ENCODE measurements at regions of chr10 and their contacts with region 1.

Region 1: DNA sequence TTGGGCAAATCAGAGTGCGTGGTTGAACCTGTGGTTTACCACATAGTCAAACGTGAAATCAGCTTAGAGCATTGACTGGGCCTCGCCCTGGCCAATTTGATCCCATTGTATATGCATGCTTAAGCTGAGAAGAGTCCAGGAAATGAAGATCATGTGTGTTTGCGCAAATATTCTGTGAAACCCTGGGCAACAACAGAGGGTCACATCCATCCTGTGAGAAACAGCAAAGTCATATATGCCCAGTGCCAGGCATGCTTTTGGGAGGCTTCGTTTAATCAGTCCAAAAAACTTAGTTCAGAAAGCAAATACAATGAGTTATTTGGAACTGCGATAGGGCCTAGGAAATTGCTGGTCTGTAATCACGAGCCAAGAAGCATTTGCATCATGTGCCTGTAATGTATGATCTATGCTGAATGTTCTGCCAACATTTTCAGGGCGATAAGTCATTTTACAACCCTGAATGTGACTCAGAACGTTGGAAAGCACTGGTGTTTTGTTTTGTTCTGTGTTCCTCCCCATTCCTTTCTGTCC is 412.1 kb upstream of the CELF2 start:
- DNase-seq: peak in 1 of 2 donors; percentile 81
- H3K4me3 ChIP-seq: no peak overlapping the region
- H3K27ac ChIP-seq: peak overlapping the region; percentile 74 to 80
- H3K4me1 ChIP-seq: no peaks in the 10 kb centered on the region
- H3K27me3 ChIP-seq: no peaks in the 10 kb centered on the region
- CTCF ChIP-seq: no peak

Region 2: DNA sequence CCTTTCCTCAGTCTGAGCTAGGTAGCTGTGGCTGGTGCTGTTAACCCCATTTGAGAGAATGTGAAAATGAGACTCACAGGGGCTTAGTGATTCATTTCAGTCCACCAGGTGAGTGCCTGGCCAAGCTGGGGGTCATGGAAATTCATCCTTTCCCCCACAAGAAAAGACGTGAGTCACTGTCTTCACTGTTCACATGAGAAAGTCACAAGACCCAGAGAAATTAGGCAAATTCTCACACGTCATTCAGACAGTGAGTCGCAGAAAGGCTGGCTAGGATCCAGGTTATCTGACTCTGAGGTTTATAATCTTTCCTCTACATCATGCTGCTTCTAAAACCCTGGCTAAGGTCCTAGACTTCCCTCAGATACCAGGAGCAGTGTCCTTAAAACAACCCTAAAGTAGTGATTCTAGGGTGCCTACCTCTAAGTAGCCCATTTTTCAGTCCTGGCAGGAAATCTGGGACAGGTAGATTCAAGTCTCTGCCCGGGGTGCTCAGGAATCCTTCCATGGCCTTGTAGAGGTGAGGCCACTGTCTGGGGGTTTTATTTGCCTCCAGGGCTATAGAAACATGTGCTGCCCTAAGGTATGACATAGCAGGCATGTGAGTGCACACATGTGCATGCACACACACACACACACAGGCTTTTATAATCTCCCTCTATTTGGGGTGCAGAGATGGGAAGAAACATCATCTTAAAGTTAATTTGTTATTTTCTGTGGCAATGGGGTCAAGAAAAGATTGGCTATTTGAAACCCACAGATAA is 15.9 kb before region 1 on chr10:
- intact Hi-C with region 1: loop called (anchors 2 kb)
- DNase-seq: peak; percentile 21 to 81
- H3K4me3 ChIP-seq: no peak overlapping the region
- H3K27ac ChIP-seq: peak overlapping the region in 1 of 2 donors; percentile 17
- H3K4me1 ChIP-seq: peaks cover 0 to 10% of the 10 kb centered on the region in 2 donors
- H3K27me3 ChIP-seq: no peaks in the 10 kb centered on the region
- CTCF ChIP-seq: no peak

Region 3: DNA sequence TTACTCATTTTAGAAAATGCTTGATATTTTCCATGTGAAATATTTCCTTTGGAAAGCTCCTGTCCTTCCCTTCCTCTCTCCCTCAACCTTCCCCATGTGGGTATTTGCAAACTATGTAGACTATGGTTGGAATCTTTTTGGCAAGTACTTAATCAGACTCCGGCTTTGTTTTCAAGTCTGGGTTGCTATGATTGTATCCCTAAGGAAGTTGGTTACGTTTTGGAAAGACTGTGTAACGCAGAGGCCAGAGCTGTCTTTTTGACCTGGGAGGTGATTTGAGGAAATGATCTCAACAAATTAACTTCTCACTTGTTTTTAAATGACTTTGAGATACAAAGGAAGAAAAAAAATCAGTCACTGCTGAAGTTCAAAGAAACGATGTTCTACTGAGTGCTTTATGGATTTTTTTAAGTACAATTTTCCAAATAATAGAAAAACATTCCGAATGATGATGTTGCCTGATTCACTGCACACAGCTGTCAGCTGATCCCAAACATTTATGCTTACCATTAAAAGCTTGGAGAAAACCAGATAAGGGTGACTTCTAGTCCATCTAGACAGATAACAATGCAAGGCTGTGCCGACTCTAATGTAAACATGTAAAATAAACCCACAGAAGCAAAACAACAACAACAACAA is 266.5 kb after region 1 on chr10:
- intact Hi-C with region 1: loop called (anchors 5 kb)
- DNase-seq: peak in 1 of 2 donors; percentile 84
- H3K4me3 ChIP-seq: peak overlapping the region in 1 of 2 donors; percentile 7
- H3K27ac ChIP-seq: peak overlapping the region; percentile 83 to 88
- H3K4me1 ChIP-seq: peaks cover 0 to 33% of the 10 kb centered on the region in 2 donors
- H3K27me3 ChIP-seq: no peaks in the 10 kb centered on the region
- CTCF ChIP-seq: no peak

Measured in ascending aorta (tissue), 2 donors.